ENCODE measurements at regions of chr6 and their contacts with region 1.

Region 1: GRCh38 chr6:112372226-112372806 is 25.2 kb downstream of the RFPL4B start:
- DNase-seq: no peak
- H3K4me3 Mint-ChIP-seq: no peak overlapping the region
- H3K27ac Mint-ChIP-seq: no peak overlapping the region
- H3K4me1 Mint-ChIP-seq: no peaks in the 10 kb centered on the region
- H3K27me3 Mint-ChIP-seq: peaks cover 26% of the 10 kb centered on the region

Region 2: DNA sequence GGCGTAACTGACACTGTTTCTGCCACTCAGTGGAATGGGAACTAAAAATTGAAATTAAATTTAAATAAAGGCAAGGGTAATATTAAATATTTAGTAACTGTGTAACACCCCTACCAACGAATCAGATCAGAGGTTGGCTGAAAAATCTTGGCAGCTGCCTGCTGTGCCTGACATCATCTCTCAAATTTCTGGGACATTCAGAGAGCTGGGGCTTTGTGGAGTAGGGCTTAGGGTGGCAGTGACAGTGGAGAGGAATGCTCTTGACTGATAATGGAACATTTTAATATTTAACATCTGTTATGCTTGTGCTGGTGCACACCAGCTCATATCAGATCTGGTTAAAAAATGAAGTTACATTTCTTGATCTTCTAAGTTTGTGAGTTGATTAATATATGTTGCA is 37.0 kb after region 1 on chr6:
- intact Hi-C with region 1: loop called (anchors 1 kb)
- DNase-seq: no peak
- H3K4me3 Mint-ChIP-seq: no peak overlapping the region
- H3K27ac Mint-ChIP-seq: no peak overlapping the region
- H3K4me1 Mint-ChIP-seq: no peaks in the 10 kb centered on the region
- H3K27me3 Mint-ChIP-seq: peaks cover 2% of the 10 kb centered on the region

Region 3: GRCh38 chr6:112579601-112580000 is 207.3 kb after region 1 on chr6:
- intact Hi-C with region 1: no loop called
- DNase-seq: no peak
- H3K4me3 Mint-ChIP-seq: no peak overlapping the region
- H3K27ac Mint-ChIP-seq: no peak overlapping the region
- H3K4me1 Mint-ChIP-seq: no peaks in the 10 kb centered on the region
- H3K27me3 Mint-ChIP-seq: no peaks in the 10 kb centered on the region

Region 4: GRCh38 chr6:113073611-113074191 is 701.4 kb after region 1 on chr6:
- intact Hi-C with region 1: no loop called
- DNase-seq: no peak
- H3K4me3 Mint-ChIP-seq: no peak overlapping the region
- H3K27ac Mint-ChIP-seq: no peak overlapping the region
- H3K4me1 Mint-ChIP-seq: no peaks in the 10 kb centered on the region
- H3K27me3 Mint-ChIP-seq: no peaks in the 10 kb centered on the region

Measured in activated CD4-positive, alpha-beta T cell treated with anti-CD3 and anti-CD28 coated beads, Interleukin-2, amount 10 ng/mL, durations not matched to agents 24 days and 14 days (primary cell).